Heart right ventricle (tissue), 16 donors: ENCODE measurements at regions of chr10 and their contacts with region 1.

Region 1: DNA sequence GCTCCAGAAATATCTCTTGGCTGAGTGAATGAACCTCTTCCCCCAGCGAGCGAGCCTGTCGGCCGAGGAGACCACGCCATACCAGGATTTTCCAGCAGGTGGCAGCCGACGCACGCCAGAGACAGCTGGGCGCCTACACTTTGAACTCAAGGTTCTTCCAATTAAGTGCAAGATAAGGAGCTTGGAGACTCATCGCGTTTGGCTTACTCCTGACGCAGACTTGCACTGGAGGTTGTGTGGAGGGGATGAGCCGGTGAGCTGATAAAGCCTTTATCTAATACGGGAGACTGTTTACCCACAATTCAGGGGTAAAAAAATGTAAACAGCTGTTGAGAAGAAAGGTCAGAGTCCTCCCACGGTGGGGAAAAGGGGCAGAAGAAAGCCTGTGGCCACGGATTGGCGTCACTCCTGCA is 45.9 kb upstream of the EMX2 start:
- DNase-seq: peak; percentile 65 to 77
- ATAC-seq: peak; percentile 72 to 92 (median 82)
- H3K4me3 ChIP-seq: no peak overlapping the region
- H3K27ac ChIP-seq: no peak overlapping the region
- H3K4me1 ChIP-seq: no peaks in the 10 kb centered on the region
- H3K27me3 ChIP-seq: peaks cover 0 to 46% (median 26%) of the 10 kb centered on the region in 7 donors
- CTCF ChIP-seq: peak; percentile 83 to 98 (median 96)

Region 2: DNA sequence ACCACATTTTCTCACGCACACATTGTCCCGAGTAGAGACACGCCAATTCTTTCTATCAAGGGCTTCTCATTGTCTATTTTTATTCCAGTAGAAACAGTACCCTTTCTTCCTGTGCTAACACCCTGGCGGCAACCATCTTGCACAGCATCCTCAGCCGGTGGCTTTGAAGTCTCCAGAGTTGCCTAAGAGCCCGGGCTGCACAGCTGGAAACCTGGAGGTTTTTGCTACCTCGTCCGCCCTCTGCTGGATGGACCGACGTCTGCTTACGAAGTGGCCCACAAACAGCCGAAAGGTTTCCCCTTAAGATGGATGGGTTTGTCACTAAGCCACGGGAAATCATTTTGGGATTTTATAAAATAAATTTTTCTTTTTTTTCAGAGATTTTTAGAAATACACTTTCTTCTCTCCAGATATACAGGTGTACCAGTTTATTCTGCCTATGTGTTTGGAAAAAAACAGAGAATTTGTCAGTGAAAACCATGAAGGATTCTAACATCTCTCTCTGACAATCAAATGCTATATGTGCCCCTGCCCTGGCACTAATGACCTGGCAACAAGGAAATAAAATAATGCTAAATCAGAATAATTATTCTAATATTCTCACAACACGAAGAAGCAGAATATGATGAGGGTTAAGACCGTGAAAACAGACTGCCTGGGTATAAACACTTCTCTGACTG is 927.3 kb after region 1 on chr10:
- intact Hi-C with region 1: loop called in 5 of 10 experiments (anchors 2 to 10 kb)
- DNase-seq: peak; percentile 67 to 69
- ATAC-seq: peak; percentile 55 to 95 (median 70)
- H3K4me3 ChIP-seq: no peak overlapping the region
- H3K27ac ChIP-seq: no peak overlapping the region
- H3K4me1 ChIP-seq: no peaks in the 10 kb centered on the region
- H3K27me3 ChIP-seq: peaks cover 0 to 39% (median 12%) of the 10 kb centered on the region in 7 donors
- CTCF ChIP-seq: peak; percentile 38 to 75 (median 72)

Region 3: GRCh38 chr10:118459726-118460193 is 963.1 kb after region 1 on chr10:
- intact Hi-C with region 1: loop called in 6 of 10 experiments (anchors 2 to 10 kb)
- DNase-seq: peak; percentile 24 to 26
- ATAC-seq: peak in 6 of 8 donors; percentile 49 to 82 (median 68)
- H3K4me3 ChIP-seq: no peak overlapping the region
- H3K27ac ChIP-seq: no peak overlapping the region
- H3K4me1 ChIP-seq: peaks cover 0 to 3% (median 0%) of the 10 kb centered on the region in 9 donors
- H3K27me3 ChIP-seq: peaks cover 0 to 74% (median 43%) of the 10 kb centered on the region in 7 donors
- CTCF ChIP-seq: peak; percentile 50 to 80 (median 76)